Activated CD4-positive, alpha-beta T cell treated with anti-CD3 and anti-CD28 coated beads for 36 hours (primary cell): ENCODE measurements at regions of chr12 and their contacts with region 1.

Region 1: DNA sequence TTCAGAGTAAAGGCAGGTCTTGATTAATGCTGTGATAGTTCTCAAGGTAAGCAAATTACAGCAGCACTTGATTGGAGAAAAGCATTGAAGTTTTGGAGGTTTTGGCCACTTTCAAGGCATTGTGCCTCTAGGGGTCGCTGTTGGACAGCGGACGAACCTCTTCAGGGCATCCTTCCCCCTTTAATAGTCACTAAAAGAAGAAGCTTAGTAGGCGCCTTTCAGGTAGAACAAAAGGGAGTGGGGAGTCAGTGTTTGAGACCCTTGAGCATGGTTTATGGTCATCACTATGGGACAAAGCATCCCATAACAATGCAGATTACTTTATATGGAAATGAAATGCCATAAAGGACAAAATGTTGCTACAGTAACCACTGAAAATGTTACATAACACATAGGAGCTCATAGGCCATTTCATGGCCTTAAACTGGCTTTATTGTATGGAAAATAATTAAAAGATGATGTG is 199.5 kb upstream of the DCN start:
- DNase-seq: peak; percentile 90
- ATAC-seq: peak; percentile 81
- H3K4me3 Mint-ChIP-seq: peak overlapping the region; percentile 70
- H3K27ac Mint-ChIP-seq: no peak overlapping the region
- H3K4me1 Mint-ChIP-seq: peaks cover 7% of the 10 kb centered on the region
- H3K27me3 Mint-ChIP-seq: peaks cover 3% of the 10 kb centered on the region

Region 2: GRCh38 chr12:91289906-91290305 is 92.2 kb before region 1 on chr12:
- CTCF ChIA-PET with region 1: no interaction called
- POLR2A ChIA-PET with region 1: no interaction called
- intact Hi-C with region 1: no loop called
- DNase-seq: no peak
- ATAC-seq: no peak
- H3K4me3 Mint-ChIP-seq: no peak overlapping the region
- H3K27ac Mint-ChIP-seq: no peak overlapping the region
- H3K4me1 Mint-ChIP-seq: no peaks in the 10 kb centered on the region
- H3K27me3 Mint-ChIP-seq: no peaks in the 10 kb centered on the region

Region 3: DNA sequence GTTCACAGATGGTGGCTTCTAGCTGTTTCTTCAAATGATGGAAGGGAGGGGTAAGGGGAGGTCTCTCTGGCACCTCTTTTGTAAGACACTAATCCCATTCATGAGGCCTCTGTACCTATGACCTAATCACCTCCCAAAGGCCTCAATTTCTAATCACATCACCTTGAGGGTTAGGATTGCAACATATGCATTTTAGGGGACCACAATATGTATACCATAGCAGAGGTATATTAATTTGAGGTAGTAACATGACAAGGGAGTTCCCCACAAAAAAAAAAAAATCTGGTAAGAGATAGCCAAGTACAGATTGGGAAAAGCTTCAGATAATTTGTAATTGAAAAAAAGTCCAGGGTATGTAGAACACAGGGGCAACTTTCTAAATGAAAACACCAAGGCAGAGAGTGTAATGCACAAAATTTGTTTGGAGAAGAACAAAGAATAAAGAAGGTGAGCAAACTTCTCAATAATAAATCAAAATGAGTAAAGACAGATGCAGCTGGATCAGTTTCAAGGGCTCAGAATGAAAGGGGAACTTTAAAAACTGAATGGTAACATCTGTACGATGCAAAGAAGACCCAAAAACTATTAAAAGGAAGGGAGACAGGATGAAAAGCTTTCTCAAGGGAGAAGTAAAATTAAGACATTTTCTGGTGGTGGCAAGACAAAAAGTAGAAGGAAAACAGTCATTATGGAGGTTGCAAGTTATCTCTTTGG is 74.0 kb before region 1 on chr12:
- CTCF ChIA-PET with region 1: no interaction called
- POLR2A ChIA-PET with region 1: no interaction called
- intact Hi-C with region 1: no loop called
- DNase-seq: no peak
- ATAC-seq: no peak
- H3K4me3 Mint-ChIP-seq: no peak overlapping the region
- H3K27ac Mint-ChIP-seq: no peak overlapping the region
- H3K4me1 Mint-ChIP-seq: no peaks in the 10 kb centered on the region
- H3K27me3 Mint-ChIP-seq: peaks cover 9% of the 10 kb centered on the region

Region 4: GRCh38 chr12:91370086-91370868 is 11.8 kb before region 1 on chr12:
- CTCF ChIA-PET with region 1: interaction called, 13 read pairs
- POLR2A ChIA-PET with region 1: no interaction called
- intact Hi-C with region 1: no loop called
- DNase-seq: no peak
- ATAC-seq: no peak
- H3K4me3 Mint-ChIP-seq: no peak overlapping the region
- H3K27ac Mint-ChIP-seq: no peak overlapping the region
- H3K4me1 Mint-ChIP-seq: no peaks in the 10 kb centered on the region
- H3K27me3 Mint-ChIP-seq: no peaks in the 10 kb centered on the region

Region 5: DNA sequence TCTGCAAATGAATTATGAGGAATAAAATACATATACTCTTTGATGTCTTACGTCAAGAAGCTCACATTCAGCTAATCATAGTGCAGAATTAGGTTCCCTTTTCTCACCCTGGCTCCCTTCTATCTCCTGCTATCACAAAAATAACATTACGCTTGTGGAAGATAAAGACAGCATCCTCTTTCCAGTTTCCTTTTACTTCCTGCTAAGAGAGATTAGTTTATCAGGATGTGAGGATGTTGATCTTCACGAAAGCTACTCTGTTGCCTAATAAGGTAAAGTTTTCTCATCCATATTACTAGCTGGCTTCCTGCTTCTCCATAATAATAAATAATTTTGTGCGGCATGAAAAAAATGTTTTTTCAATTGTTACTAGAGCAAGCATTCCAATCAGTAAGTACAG is 18.2 kb after region 1 on chr12:
- CTCF ChIA-PET with region 1: interaction called, 11 read pairs
- POLR2A ChIA-PET with region 1: no interaction called
- intact Hi-C with region 1: no loop called
- DNase-seq: no peak
- ATAC-seq: no peak
- H3K4me3 Mint-ChIP-seq: no peak overlapping the region
- H3K27ac Mint-ChIP-seq: no peak overlapping the region
- H3K4me1 Mint-ChIP-seq: no peaks in the 10 kb centered on the region
- H3K27me3 Mint-ChIP-seq: no peaks in the 10 kb centered on the region

Region 6: GRCh38 chr12:91577586-91578539 is 195.8 kb after region 1 on chr12:
- CTCF ChIA-PET with region 1: interaction called, 5 read pairs
- POLR2A ChIA-PET with region 1: no interaction called
- intact Hi-C with region 1: loop called in 1 of 2 experiments (anchors 5 kb)
- DNase-seq: no peak
- ATAC-seq: peak; percentile 47
- H3K4me3 Mint-ChIP-seq: peak overlapping the region; percentile 35
- H3K27ac Mint-ChIP-seq: peak overlapping the region; percentile 32
- H3K4me1 Mint-ChIP-seq: peaks cover 8% of the 10 kb centered on the region
- H3K27me3 Mint-ChIP-seq: no peaks in the 10 kb centered on the region

Region 7: GRCh38 chr12:91985002-91985787 is 603.1 kb after region 1 on chr12:
- CTCF ChIA-PET with region 1: no interaction called
- POLR2A ChIA-PET with region 1: no interaction called
- intact Hi-C with region 1: loop called in 1 of 2 experiments (anchors 10 kb)
- DNase-seq: no peak
- ATAC-seq: no peak
- H3K4me3 Mint-ChIP-seq: no peak overlapping the region
- H3K27ac Mint-ChIP-seq: no peak overlapping the region
- H3K4me1 Mint-ChIP-seq: peaks cover 49% of the 10 kb centered on the region
- H3K27me3 Mint-ChIP-seq: no peaks in the 10 kb centered on the region

Region 8: GRCh38 chr12:92059976-92060375 is 677.9 kb after region 1 on chr12:
- CTCF ChIA-PET with region 1: no interaction called
- POLR2A ChIA-PET with region 1: no interaction called
- intact Hi-C with region 1: loop called in 1 of 2 experiments (anchors 5 kb)
- DNase-seq: no peak
- ATAC-seq: no peak
- H3K4me3 Mint-ChIP-seq: peak overlapping the region; percentile 42
- H3K27ac Mint-ChIP-seq: peak overlapping the region; percentile 35
- H3K4me1 Mint-ChIP-seq: peaks cover 90% of the 10 kb centered on the region
- H3K27me3 Mint-ChIP-seq: no peaks in the 10 kb centered on the region

Region 9: GRCh38 chr12:92649511-92650227 is 1267.6 kb after region 1 on chr12:
- CTCF ChIA-PET with region 1: interaction called, 4 read pairs
- POLR2A ChIA-PET with region 1: no interaction called
- intact Hi-C with region 1: loop called (anchors 1 kb)
- DNase-seq: peak; percentile 71
- ATAC-seq: peak; percentile 90
- H3K4me3 Mint-ChIP-seq: no peak overlapping the region
- H3K27ac Mint-ChIP-seq: no peak overlapping the region
- H3K4me1 Mint-ChIP-seq: peaks cover 10% of the 10 kb centered on the region
- H3K27me3 Mint-ChIP-seq: no peaks in the 10 kb centered on the region